Caco-2 (cell line): ENCODE measurements at regions of chr6 and their contacts with region 1.

Region 1: GRCh38 chr6:86856937-86857563 is 80.3 kb upstream of the HTR1E start:
- DNase-seq: peak in 1 of 2 experiments; percentile 48
- H3K4me3 ChIP-seq: no peak overlapping the region
- H3K4me3 Mint-ChIP-seq: no peak overlapping the region
- H3K27ac Mint-ChIP-seq: no peak overlapping the region
- H3K4me1 ChIP-seq: no peaks in the 10 kb centered on the region
- H3K4me1 Mint-ChIP-seq: no peaks in the 10 kb centered on the region
- H3K27me3 ChIP-seq: no peaks in the 10 kb centered on the region
- H3K27me3 Mint-ChIP-seq: no peaks in the 10 kb centered on the region
- CTCF ChIP-seq: peak; percentile 70 to 78

Region 2: GRCh38 chr6:86380571-86381136 is 476.4 kb before region 1 on chr6:
- CTCF ChIA-PET with region 1: no interaction called
- POLR2A ChIA-PET with region 1: no interaction called
- intact Hi-C with region 1: loop called (anchors 10 kb)
- DNase-seq: no peak
- H3K4me3 ChIP-seq: no peak overlapping the region
- H3K4me3 Mint-ChIP-seq: no peak overlapping the region
- H3K27ac Mint-ChIP-seq: no peak overlapping the region
- H3K4me1 ChIP-seq: no peaks in the 10 kb centered on the region
- H3K4me1 Mint-ChIP-seq: no peaks in the 10 kb centered on the region
- H3K27me3 ChIP-seq: no peaks in the 10 kb centered on the region
- H3K27me3 Mint-ChIP-seq: peaks cover 3% of the 10 kb centered on the region
- CTCF ChIP-seq: no peak

Region 3: DNA sequence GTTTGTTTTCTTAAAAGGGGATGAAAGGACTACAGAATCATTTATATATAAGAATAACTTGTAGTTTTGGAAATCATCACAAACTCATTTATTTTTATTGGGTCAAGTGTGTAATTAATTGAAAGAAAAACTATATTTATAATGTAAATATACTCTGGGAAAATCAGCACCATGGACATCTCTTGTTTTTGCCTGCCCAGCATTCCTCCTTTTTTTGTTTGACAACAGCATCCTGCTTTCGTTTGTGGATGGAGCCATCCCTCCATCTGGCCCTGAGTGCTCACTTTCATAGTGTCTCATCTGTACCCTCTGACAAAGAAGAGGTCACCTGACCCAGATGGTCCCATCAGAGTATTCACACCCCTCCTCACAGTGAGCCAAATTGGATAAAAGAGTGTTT is 227.9 kb before region 1 on chr6:
- CTCF ChIA-PET with region 1: no interaction called
- POLR2A ChIA-PET with region 1: no interaction called
- intact Hi-C with region 1: loop called (anchors 10 kb)
- DNase-seq: no peak
- H3K4me3 ChIP-seq: no peak overlapping the region
- H3K4me3 Mint-ChIP-seq: no peak overlapping the region
- H3K27ac Mint-ChIP-seq: no peak overlapping the region
- H3K4me1 ChIP-seq: no peaks in the 10 kb centered on the region
- H3K4me1 Mint-ChIP-seq: no peaks in the 10 kb centered on the region
- H3K27me3 ChIP-seq: no peaks in the 10 kb centered on the region
- H3K27me3 Mint-ChIP-seq: no peaks in the 10 kb centered on the region
- CTCF ChIP-seq: no peak

Region 4: GRCh38 chr6:86715676-86716075 is 141.4 kb before region 1 on chr6:
- CTCF ChIA-PET with region 1: interaction called, 3 read pairs
- POLR2A ChIA-PET with region 1: no interaction called
- intact Hi-C with region 1: loop called (anchors 5 kb)
- DNase-seq: peak; percentile 74 to 75
- H3K4me3 ChIP-seq: no peak overlapping the region
- H3K4me3 Mint-ChIP-seq: no peak overlapping the region
- H3K27ac Mint-ChIP-seq: peak overlapping the region; percentile 92
- H3K4me1 ChIP-seq: peaks cover 19% of the 10 kb centered on the region
- H3K4me1 Mint-ChIP-seq: peaks cover 24% of the 10 kb centered on the region
- H3K27me3 ChIP-seq: no peaks in the 10 kb centered on the region
- H3K27me3 Mint-ChIP-seq: no peaks in the 10 kb centered on the region
- CTCF ChIP-seq: no peak

Region 5: GRCh38 chr6:86782328-86782727 is 74.7 kb before region 1 on chr6:
- CTCF ChIA-PET with region 1: no interaction called
- POLR2A ChIA-PET with region 1: no interaction called
- intact Hi-C with region 1: loop called (anchors 2 kb)
- DNase-seq: no peak
- H3K4me3 ChIP-seq: no peak overlapping the region
- H3K4me3 Mint-ChIP-seq: no peak overlapping the region
- H3K27ac Mint-ChIP-seq: no peak overlapping the region
- H3K4me1 ChIP-seq: peaks cover 17% of the 10 kb centered on the region
- H3K4me1 Mint-ChIP-seq: peaks cover 11% of the 10 kb centered on the region
- H3K27me3 ChIP-seq: no peaks in the 10 kb centered on the region
- H3K27me3 Mint-ChIP-seq: no peaks in the 10 kb centered on the region
- CTCF ChIP-seq: no peak

Region 6: DNA sequence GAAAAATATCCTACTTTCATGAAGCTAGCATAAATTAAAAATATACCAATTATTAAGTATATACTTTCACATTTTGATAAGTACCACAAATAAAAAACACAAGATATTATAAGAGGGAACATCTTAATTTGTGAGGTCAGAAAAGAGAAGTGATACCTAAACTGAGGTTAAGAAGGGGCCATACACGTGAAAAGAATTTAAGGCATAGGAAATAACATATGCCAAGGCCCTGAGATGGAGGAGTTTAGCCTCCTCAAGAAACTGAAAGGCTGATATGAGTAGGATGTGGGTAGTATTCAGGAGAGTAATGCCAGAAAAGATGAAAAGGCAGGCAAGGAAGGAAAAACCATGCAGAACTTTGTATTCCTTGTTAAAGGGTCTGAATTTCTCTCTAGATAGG is 36.3 kb before region 1 on chr6:
- CTCF ChIA-PET with region 1: no interaction called
- POLR2A ChIA-PET with region 1: no interaction called
- intact Hi-C with region 1: no loop called
- DNase-seq: no peak
- H3K4me3 ChIP-seq: no peak overlapping the region
- H3K4me3 Mint-ChIP-seq: no peak overlapping the region
- H3K27ac Mint-ChIP-seq: no peak overlapping the region
- H3K4me1 ChIP-seq: no peaks in the 10 kb centered on the region
- H3K4me1 Mint-ChIP-seq: no peaks in the 10 kb centered on the region
- H3K27me3 ChIP-seq: no peaks in the 10 kb centered on the region
- H3K27me3 Mint-ChIP-seq: no peaks in the 10 kb centered on the region
- CTCF ChIP-seq: no peak

Region 7: GRCh38 chr6:86937219-86938079 is 80.4 kb after region 1 on chr6 and contains the start of gene HTR1E:
- CTCF ChIA-PET with region 1: no interaction called
- POLR2A ChIA-PET with region 1: no interaction called
- intact Hi-C with region 1: loop called (anchors 1 kb)
- DNase-seq: peak in 1 of 2 experiments; percentile 59
- H3K4me3 ChIP-seq: no peak within 1 kb of the TSS
- H3K4me3 Mint-ChIP-seq: peak within 1 kb of the TSS; percentile 46
- H3K27ac Mint-ChIP-seq: no peak within 1 kb of the TSS
- H3K4me1 ChIP-seq: no peaks in the 10 kb centered on the region
- H3K4me1 Mint-ChIP-seq: no peaks in the 10 kb centered on the region
- H3K27me3 ChIP-seq: no peaks in the 10 kb centered on the region; the same call in 1 of the 2 replicates
- H3K27me3 Mint-ChIP-seq: peaks cover 19% of the 10 kb centered on the region
- CTCF ChIP-seq: peak; percentile 50 to 66
- total RNA-seq, gene HTR1E: not detected in 2 replicates

Region 8: GRCh38 chr6:87029711-87030314 is 172.8 kb after region 1 on chr6:
- CTCF ChIA-PET with region 1: no interaction called
- POLR2A ChIA-PET with region 1: no interaction called
- intact Hi-C with region 1: loop called (anchors 2 kb)
- DNase-seq: peak in 1 of 2 experiments; percentile 11
- H3K4me3 ChIP-seq: no peak overlapping the region
- H3K4me3 Mint-ChIP-seq: no peak overlapping the region
- H3K27ac Mint-ChIP-seq: no peak overlapping the region
- H3K4me1 ChIP-seq: no peaks in the 10 kb centered on the region
- H3K4me1 Mint-ChIP-seq: no peaks in the 10 kb centered on the region
- H3K27me3 ChIP-seq: no peaks in the 10 kb centered on the region
- H3K27me3 Mint-ChIP-seq: peaks cover 16% of the 10 kb centered on the region
- CTCF ChIP-seq: peak; percentile 54 to 59